Dorsolateral prefrontal cortex (tissue), 120 donors: ENCODE measurements at regions of chr14 and their contacts with region 1.

Region 1: DNA sequence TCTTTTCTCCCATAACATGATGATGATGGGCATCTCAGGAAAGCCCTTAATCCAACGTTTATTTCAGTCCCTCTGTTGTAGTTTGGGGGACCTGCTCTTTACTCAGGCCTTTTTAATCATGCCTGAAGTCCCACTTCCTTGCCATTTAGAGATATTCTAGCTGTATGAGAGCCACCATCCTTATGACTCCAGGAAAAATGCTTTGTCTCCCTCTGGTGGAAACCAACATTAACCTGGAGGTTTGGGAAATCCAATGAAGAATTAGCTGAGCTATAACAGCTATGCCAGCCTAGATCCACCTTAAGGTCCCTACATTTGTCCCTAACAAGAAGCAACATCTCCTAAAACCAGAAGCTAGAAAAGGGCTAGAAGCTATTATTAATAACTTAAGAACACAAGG is 1399.1 kb downstream of the LRFN5 start:
- DNase-seq: no peak
- H3K4me3 ChIP-seq: no peak overlapping the region
- H3K27ac ChIP-seq: no peak overlapping the region
- H3K27me3 ChIP-seq: no peaks in the 10 kb centered on the region
- CTCF ChIP-seq: peak in 35 of 56 donors; percentile 9 to 62 (median 35)

Region 2: GRCh38 chr14:42911396-42912041 is 94.3 kb before region 1 on chr14:
- intact Hi-C with region 1: loop called in 1 of 2 experiments (anchors 10 kb)
- DNase-seq: no peak
- H3K4me3 ChIP-seq: no peak overlapping the region
- H3K27ac ChIP-seq: no peak overlapping the region
- H3K27me3 ChIP-seq: no peaks in the 10 kb centered on the region
- CTCF ChIP-seq: peak in 14 of 56 donors; percentile 8 to 44 (median 21)